HepG2 (cell line): ENCODE measurements at regions of chr4 and their contacts with region 1.

Region 1: DNA sequence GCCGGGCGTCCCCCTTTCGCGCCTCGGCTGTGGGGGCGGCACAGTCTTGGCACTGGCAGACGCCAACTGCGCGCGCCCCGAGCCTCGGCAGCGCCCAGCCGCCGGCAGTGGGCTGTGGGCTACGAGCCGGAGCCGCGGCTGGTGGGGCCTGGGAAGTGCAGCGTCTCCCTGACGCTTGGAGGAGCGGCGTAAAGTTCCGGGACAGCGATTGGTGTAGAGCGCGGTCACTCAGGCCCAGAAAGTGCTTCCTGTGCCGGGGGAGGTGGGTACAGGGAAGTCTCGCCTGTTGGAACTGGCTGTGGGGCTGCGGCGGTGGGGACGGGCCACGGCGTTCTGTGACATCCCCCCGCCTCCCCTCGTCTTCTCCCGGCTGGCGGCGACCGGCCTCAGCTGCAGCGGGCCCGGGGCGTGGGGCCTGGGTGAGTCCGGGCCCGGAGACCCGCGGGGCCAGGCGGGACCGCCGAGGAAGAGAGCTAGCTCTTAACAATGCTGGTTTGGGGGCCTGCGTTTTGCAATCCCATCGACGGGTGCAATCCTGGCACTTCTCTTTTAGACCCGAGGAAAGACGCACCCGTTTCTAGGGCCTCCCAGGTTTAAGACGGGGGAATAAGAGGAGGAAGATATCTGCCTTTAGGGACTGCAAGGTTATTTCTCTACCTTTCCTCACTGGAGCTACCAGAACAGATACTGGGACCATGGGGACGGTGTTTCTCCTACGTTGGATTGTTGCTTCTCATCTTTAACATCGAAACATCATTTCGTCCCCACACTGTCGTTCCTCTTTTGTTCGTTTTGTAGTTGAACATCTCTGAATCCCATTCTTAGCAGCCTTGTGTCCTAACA is at the starts of genes RWDD4 and TRAPPC11:
- DNase-seq: peak; percentile 94
- ATAC-seq: peak; percentile 99
- H3K4me3 ChIP-seq: peak within 1 kb of the TSS; percentile 77 to 85 (median 82)
- H3K27ac ChIP-seq: peak within 1 kb of the TSS; percentile 70
- H3K4me1 ChIP-seq: peaks cover 35% of the 10 kb centered on the region
- H3K27me3 ChIP-seq: no peaks in the 10 kb centered on the region; a peak in 1 of 5 replicates
- CTCF ChIP-seq: 0 out of 2 replicates have a peak, but pooled peaks have one; percentile 35
- EP300 ChIP-seq: no peak
- POLR2A ChIP-seq: peak; percentile 43 to 72; a peak in 3 of 4 replicates
- RAD21 ChIP-seq: peak; percentile 67
- total RNA-seq, gene RWDD4: 25.4 and 28.9 TPM in 2 replicates
- total RNA-seq, gene TRAPPC11: 18.0 and 22.7 TPM in 2 replicates

Region 2: DNA sequence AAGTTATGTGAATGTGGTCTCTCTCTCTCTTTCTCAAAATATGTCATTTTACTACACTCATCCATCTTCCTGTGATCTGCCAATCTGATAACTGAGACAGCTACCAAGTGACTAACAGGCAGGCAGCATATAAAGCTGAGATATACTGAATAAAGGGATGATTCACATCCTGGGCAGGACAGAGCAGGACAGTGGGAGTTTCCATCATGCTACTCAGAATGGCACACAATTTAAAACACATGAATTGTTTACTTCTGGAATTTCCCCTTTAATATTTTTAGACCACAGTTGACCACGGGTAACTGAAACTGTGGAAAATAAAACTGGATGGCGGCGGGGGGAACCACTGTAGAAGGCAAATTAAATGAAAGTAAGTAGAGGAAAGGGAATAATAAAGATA is 683.4 kb before region 1 on chr4:
- CTCF ChIA-PET with region 1: no interaction called
- POLR2A ChIA-PET with region 1: no interaction called
- in situ Hi-C with region 1: no loop called
- intact Hi-C with region 1: no loop called
- DNase-seq: no peak
- ATAC-seq: no peak
- H3K4me3 ChIP-seq: no peak overlapping the region
- H3K27ac ChIP-seq: no peak overlapping the region
- H3K4me1 ChIP-seq: no peaks in the 10 kb centered on the region
- H3K27me3 ChIP-seq: no peaks in the 10 kb centered on the region; a peak in 2 of 5 replicates
- CTCF ChIP-seq: no peak
- EP300 ChIP-seq: no peak
- POLR2A ChIP-seq: no peak
- RAD21 ChIP-seq: no peak

Region 3: GRCh38 chr4:183504064-183504929 is 155.0 kb before region 1 on chr4:
- CTCF ChIA-PET with region 1: no interaction called
- POLR2A ChIA-PET with region 1: no interaction called
- in situ Hi-C with region 1: no loop called
- intact Hi-C with region 1: loop called (anchors 1 kb)
- DNase-seq: peak; percentile 93
- ATAC-seq: peak; percentile 82
- H3K4me3 ChIP-seq: peak overlapping the region; percentile 84 to 99 (median 97)
- H3K27ac ChIP-seq: peak overlapping the region; percentile 91
- H3K4me1 ChIP-seq: peaks cover 49% of the 10 kb centered on the region
- H3K27me3 ChIP-seq: no peaks in the 10 kb centered on the region; a peak in 1 of 5 replicates
- CTCF ChIP-seq: peak; percentile 53
- EP300 ChIP-seq: peak; percentile 10 to 12; a peak in 1 of 4 replicates
- POLR2A ChIP-seq: peak; percentile 65 to 77
- RAD21 ChIP-seq: peak; percentile 86

Region 4: GRCh38 chr4:183722731-183723560 is 63.7 kb after region 1 on chr4:
- CTCF ChIA-PET with region 1: no interaction called
- POLR2A ChIA-PET with region 1: no interaction called
- in situ Hi-C with region 1: no loop called
- intact Hi-C with region 1: loop called (anchors 5 kb)
- DNase-seq: no peak
- ATAC-seq: peak; percentile 43
- H3K4me3 ChIP-seq: peak overlapping the region in 1 of 3 experiments; percentile 58; a peak in 2 of 6 replicates
- H3K27ac ChIP-seq: peak overlapping the region; percentile 70
- H3K4me1 ChIP-seq: peaks cover 56% of the 10 kb centered on the region
- H3K27me3 ChIP-seq: no peaks in the 10 kb centered on the region
- CTCF ChIP-seq: no peak
- EP300 ChIP-seq: no peak
- POLR2A ChIP-seq: no peak
- RAD21 ChIP-seq: no peak